Spleen (tissue), 13 donors: ENCODE measurements at regions of chr2 and their contacts with region 1.

Region 1: GRCh38 chr2:199985625-199986207 is 30.3 kb downstream of the MAIP1 start:
- DNase-seq: no peak
- H3K4me3 ChIP-seq: no peak overlapping the region
- H3K27ac ChIP-seq: no peak overlapping the region
- H3K4me1 ChIP-seq: peaks cover 0 to 8% (median 0%) of the 10 kb centered on the region in 6 donors
- H3K27me3 ChIP-seq: no peaks in the 10 kb centered on the region
- CTCF ChIP-seq: peak in 9 of 11 experiments; percentile 9 to 67 (median 46)
- POLR2A ChIP-seq: no peak

Region 2: DNA sequence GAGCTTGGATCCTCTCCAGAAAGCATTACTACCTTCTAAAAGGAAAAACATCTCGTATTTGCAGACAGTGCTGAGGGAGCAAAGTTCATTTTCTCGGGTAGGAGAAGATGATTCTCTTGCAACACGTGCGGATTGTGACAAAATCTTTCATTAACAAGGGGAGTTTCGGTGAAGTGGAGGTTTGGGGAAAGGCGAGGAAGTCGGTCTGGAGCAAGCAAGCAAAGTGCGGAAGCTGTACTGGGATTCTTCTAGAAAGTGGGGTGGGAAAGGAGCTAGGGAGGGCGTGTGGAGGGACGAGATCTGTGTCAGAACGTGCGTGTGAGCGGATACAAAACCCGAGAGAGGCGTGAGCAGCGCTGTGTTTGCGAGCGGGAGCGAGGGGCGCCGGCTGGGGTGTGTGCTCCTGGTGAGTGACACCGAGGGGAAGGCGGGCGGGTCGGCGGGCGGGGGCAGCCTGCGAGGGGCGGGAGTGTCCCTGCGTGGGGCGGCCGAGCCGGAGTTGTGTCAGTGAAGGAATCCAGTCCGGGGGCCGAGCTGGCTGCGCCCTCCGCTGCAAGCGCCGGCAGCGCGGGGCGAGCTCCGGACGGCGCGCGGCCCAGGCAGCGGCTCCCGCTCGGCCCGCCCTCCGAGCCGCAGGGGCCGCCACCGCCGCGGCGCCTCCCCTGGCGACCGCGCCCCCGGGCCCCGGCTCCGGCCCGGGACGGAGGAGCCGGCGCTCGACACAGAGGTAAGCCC is 320.6 kb after region 1 on chr2 and contains the start of gene SPATS2L:
- intact Hi-C with region 1: loop called (anchors 10 kb)
- DNase-seq: peak; percentile 89
- H3K4me3 ChIP-seq: peak within 1 kb of the TSS; percentile 67 to 92 (median 78)
- H3K27ac ChIP-seq: peak within 1 kb of the TSS; percentile 77 to 90 (median 86)
- H3K4me1 ChIP-seq: peaks cover 4 to 39% (median 22%) of the 10 kb centered on the region in 6 donors
- H3K27me3 ChIP-seq: peaks cover 0 to 28% (median 5%) of the 10 kb centered on the region in 7 donors
- CTCF ChIP-seq: no peak
- POLR2A ChIP-seq: no peak
- total RNA-seq, gene SPATS2L: 42.6 to 84.7 (median 64.0) TPM

Region 3: GRCh38 chr2:200713003-200713703 is 727.4 kb after region 1 on chr2:
- intact Hi-C with region 1: no loop called
- DNase-seq: peak; percentile 95
- H3K4me3 ChIP-seq: peak overlapping the region in 5 of 8 donors; percentile 20 to 52 (median 21)
- H3K27ac ChIP-seq: peak overlapping the region; percentile 58 to 88 (median 80)
- H3K4me1 ChIP-seq: peaks cover 0 to 16% (median 7%) of the 10 kb centered on the region in 6 donors
- H3K27me3 ChIP-seq: no peaks in the 10 kb centered on the region
- CTCF ChIP-seq: peak; percentile 51 to 83 (median 76)
- POLR2A ChIP-seq: peak in 2 of 3 donors; percentile 69 to 86